ENCODE measurements at regions of chr3 and their contacts with region 1.

Region 1: DNA sequence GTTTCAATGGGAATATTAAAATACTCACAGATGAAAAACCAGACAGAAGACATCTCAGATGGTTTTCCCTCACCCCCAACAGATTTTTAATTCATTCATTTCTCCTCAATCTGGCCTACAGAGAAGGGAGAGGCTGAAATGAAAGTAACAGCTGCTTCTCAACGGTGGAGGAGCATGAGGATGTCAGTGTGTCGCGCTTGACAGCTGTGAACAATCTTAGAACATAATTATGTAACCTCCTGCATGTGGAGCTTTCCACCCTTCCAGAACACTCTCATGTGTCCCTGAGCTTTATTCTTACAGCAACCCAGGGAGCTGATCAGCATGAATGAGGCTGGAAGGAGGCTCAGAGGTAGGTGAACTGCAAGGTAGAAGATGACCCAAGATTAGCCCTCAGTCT is 52.7 kb downstream of the MB21D2 start:
- DNase-seq: no peak
- CTCF ChIP-seq: no peak

Region 2: GRCh38 chr3:192851821-192852424 is 13.0 kb before region 1 on chr3:
- CTCF ChIA-PET with region 1: interaction called, 12 read pairs
- POLR2A ChIA-PET with region 1: no interaction called
- DNase-seq: no peak
- CTCF ChIP-seq: no peak

Region 3: GRCh38 chr3:192879336-192880106 is 14.6 kb after region 1 on chr3:
- CTCF ChIA-PET with region 1: interaction called, 22 read pairs
- POLR2A ChIA-PET with region 1: no interaction called
- DNase-seq: no peak
- CTCF ChIP-seq: no peak

Region 4: GRCh38 chr3:192887047-192887446 is 22.1 kb after region 1 on chr3:
- CTCF ChIA-PET with region 1: interaction called, 23 read pairs
- POLR2A ChIA-PET with region 1: no interaction called
- DNase-seq: no peak
- CTCF ChIP-seq: no peak

Region 5: DNA sequence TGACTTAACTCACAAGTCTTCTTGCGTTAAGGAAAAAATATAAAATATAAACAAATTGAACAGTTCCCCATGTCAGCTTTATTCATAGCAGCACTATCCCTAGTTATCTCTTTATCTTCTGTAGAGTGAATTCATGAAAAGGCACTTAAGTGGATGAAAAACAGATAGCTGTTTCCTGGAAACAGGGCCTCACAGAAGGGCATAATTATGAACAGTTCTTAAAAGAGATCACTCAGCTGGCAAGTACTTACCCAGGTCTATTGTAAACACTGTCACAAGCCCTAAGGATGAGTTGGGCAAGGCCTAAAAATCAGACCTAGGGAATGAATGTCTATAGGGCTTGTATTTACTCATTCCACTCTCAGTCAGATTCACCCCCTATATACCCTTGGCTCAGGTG is 42.0 kb after region 1 on chr3:
- CTCF ChIA-PET with region 1: no interaction called
- POLR2A ChIA-PET with region 1: no interaction called
- DNase-seq: no peak
- CTCF ChIP-seq: no peak